ENCODE measurements at regions of chr1 and their contacts with region 1.

Region 1: DNA sequence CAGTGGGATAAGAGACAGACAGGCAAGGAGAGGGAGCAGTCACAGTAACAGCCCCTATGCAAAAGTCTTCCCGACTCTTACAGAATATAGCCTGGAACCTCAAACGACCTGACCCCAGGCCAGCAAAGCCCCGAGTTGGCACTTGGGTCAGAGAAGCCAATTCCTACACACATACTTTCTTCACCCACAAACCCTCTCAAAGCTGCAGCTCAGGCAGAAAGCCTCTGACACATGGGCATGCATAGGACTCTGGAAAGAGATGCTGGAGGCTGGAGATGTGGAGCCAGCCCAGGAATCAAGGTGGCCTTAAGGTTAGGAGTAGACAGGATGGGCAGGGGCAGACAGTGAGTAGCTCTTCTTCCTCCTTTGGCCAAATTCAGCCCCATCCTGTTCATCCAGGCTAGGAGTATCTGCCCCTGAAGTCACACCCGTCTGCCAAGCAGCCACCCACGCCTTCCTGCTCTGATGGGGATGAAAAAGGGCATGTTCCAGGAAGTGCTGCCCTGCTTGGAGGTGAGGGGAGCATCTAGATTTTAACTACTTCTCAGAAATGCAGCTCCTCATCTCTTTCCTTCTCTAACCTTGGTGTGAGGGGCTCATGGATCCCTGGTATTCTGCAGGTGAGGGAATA is 7.8 kb downstream of the SLC41A1 start:
- DNase-seq: peak; percentile 47
- H3K4me3 ChIP-seq: peak overlapping the region in 1 of 3 experiments; percentile 4
- H3K27ac ChIP-seq: peak overlapping the region; percentile 3
- H3K4me1 ChIP-seq: peaks cover 23% of the 10 kb centered on the region
- H3K27me3 ChIP-seq: no peaks in the 10 kb centered on the region
- CTCF ChIP-seq: no peak

Region 2: GRCh38 chr1:205860566-205860965 is 55.4 kb after region 1 on chr1:
- CTCF ChIA-PET with region 1: no interaction called
- dilution Hi-C with region 1: loop called (anchors 5 kb)
- in situ Hi-C with region 1: no loop called
- intact Hi-C with region 1: no loop called
- DNase-seq: no peak
- H3K4me3 ChIP-seq: no peak overlapping the region
- H3K27ac ChIP-seq: no peak overlapping the region
- H3K4me1 ChIP-seq: no peaks in the 10 kb centered on the region
- H3K27me3 ChIP-seq: peaks cover 3% of the 10 kb centered on the region
- CTCF ChIP-seq: no peak

Region 3: DNA sequence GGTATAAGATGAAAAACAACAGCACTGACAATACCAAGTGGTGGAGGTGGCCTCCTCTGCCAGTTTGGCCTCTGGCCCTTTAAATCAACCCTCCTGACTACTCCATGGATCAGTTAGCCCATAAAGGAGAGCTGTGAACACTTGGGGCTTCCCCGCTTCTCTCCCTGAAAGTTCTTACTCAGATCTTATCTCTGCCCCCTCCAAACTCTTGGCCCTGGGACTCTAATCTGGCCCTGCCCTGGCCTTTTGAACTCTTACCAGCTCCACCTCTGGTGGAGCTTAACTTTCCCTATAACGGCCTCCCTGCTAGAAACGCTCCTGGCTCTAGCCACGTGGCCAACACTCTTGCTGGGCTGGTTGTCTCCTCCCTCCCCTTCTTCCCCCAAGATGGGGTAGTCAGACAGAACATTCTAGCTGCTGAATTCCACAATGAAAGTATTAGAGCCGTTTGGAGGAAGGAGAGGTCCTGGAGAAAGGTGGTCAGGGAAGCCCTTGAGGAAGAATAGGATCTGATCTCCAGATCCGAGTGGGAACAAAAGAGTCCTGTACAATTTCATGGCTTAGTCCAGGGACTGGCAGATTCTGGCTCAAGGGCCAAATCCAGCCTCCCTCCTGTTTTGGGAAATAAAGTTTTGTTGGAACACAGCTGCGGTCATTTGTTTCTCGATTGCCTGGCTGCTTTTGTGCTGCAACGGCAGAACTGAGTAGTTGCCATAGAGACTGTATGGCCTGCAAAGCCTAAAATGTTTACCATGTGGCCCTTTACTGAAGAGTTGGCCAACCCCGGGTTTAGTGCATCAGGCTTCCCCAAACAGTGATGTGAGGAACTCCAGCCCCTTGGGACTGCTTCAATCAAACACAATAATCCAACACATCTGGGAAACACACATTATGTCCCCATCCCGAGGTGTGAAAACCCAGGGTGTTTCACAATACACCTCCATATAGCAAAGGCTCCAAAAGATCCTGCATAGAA is 1150.6 kb after region 1 on chr1:
- CTCF ChIA-PET with region 1: no interaction called
- dilution Hi-C with region 1: no loop called
- in situ Hi-C with region 1: no loop called
- intact Hi-C with region 1: no loop called
- DNase-seq: no peak
- H3K4me3 ChIP-seq: no peak overlapping the region
- H3K27ac ChIP-seq: no peak overlapping the region
- H3K4me1 ChIP-seq: peaks cover 8% of the 10 kb centered on the region
- H3K27me3 ChIP-seq: no peaks in the 10 kb centered on the region
- CTCF ChIP-seq: no peak

Measured in mammary epithelial cell (primary cell).